ENCODE measurements at regions of chr12 and their contacts with region 1.

Region 1: GRCh38 chr12:69157023-69157655 is 82.2 kb upstream of the CPSF6 start:
- DNase-seq: peak; percentile 64
- ATAC-seq: peak; percentile 94
- H3K4me3 ChIP-seq: no peak overlapping the region
- H3K27ac ChIP-seq: no peak overlapping the region
- H3K4me1 ChIP-seq: peaks cover 18% of the 10 kb centered on the region
- H3K27me3 ChIP-seq: no peaks in the 10 kb centered on the region
- CTCF ChIP-seq: peak; percentile 95 to 100 (median 99); a peak in 5 of 6 replicates
- EP300 ChIP-seq: no peak
- POLR2A ChIP-seq: peak; percentile 35; the same call in 1 of the 2 replicates
- RAD21 ChIP-seq: peak; percentile 66

Region 2: DNA sequence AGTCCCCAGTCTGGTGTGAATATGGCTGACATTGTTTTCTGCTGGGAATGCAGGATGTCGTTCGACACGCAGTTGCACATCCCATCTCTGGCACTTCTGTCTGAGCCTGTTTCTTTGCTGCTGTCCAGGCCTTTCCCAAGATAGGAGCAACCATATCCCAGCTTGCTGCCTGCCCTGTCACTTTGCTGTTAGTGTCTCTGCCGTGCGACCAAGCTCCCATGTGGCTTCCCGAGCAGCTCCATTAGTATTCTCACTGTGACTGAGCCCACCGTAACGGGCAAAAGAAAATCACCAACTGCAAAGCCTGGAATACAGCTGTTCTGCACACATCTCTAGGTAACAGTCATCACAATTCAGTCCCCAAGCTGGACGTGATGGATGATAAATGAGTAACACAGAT is 16.2 kb after region 1 on chr12:
- CTCF ChIA-PET with region 1: interaction called, 17 read pairs
- POLR2A ChIA-PET with region 1: no interaction called
- RAD21 ChIA-PET with region 1: interaction called, 5 read pairs
- SMC1A ChIA-PET with region 1: interaction called, 4 read pairs
- in situ Hi-C with region 1: no loop called
- intact Hi-C with region 1: no loop called
- DNase-seq: no peak
- ATAC-seq: no peak
- H3K4me3 ChIP-seq: no peak overlapping the region
- H3K27ac ChIP-seq: no peak overlapping the region
- H3K4me1 ChIP-seq: no peaks in the 10 kb centered on the region
- H3K27me3 ChIP-seq: 0 out of 4 replicates have a peak, but pooled peaks cover 0 to 2% of the 10 kb centered on the region in 2 experiments
- CTCF ChIP-seq: no peak
- EP300 ChIP-seq: no peak
- POLR2A ChIP-seq: no peak
- RAD21 ChIP-seq: no peak

Region 3: DNA sequence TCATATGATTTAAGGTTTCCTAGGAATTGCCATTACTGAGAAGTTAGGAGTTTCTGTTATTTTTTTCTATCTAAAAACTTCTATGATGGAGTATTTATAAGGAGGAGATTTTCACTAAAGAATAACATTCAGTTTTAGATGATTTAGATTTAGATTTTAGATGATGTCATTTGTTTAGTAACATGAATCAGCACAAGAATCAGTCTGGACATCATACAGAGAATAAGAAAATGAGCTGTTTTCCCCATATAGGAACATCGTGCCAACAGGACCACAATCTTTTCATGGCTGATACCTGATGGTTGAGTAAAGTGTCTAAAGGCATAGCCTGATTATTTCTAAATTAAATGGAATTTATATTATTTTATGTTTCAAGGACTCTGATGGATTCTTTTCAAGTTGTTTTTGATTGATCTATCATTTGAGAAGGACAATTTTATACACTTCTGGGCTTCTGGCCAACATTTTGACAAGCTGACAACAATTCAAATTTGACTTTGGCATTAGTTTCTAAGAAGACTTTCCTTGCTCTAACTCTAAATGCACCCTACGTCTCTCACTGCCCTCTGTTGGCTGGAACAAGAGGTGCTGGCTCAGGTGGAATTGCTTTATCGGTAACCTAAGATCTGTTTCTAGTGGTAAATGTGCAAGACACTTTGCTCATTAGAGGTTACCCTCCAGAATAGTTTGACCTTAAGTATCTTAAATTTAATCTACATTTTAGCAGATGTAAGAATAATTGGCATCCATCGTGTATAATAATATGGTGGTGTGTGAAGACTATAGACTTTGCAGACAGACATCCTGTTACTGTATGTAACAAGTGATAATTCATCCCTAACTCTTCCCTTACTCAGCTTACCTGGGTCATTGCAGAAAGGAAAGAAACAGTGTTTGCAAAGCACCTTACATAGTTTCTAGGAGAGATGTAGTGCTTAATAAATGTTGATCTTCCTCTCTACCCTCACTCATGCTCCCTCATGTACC is 39.5 kb after region 1 on chr12:
- CTCF ChIA-PET with region 1: interaction called, 21 read pairs
- POLR2A ChIA-PET with region 1: no interaction called
- RAD21 ChIA-PET with region 1: interaction called, 9 read pairs
- SMC1A ChIA-PET with region 1: interaction called, 3 read pairs
- in situ Hi-C with region 1: no loop called
- intact Hi-C with region 1: loop called (anchors 2 kb)
- DNase-seq: no peak
- ATAC-seq: peak; percentile 45; the same call in 2 of the 3 replicates
- H3K4me3 ChIP-seq: no peak overlapping the region
- H3K27ac ChIP-seq: no peak overlapping the region
- H3K4me1 ChIP-seq: no peaks in the 10 kb centered on the region
- H3K27me3 ChIP-seq: no peaks in the 10 kb centered on the region
- CTCF ChIP-seq: peak; percentile 27 to 48 (median 46); a peak in 5 of 6 replicates
- EP300 ChIP-seq: no peak
- POLR2A ChIP-seq: no peak
- RAD21 ChIP-seq: 0 out of 2 replicates have a peak, but pooled peaks have one; percentile 21

Region 4: GRCh38 chr12:69247268-69248018 is 90.3 kb after region 1 on chr12:
- CTCF ChIA-PET with region 1: interaction called, 285 read pairs
- POLR2A ChIA-PET with region 1: interaction called, 7 read pairs
- RAD21 ChIA-PET with region 1: interaction called, 88 read pairs
- SMC1A ChIA-PET with region 1: interaction called, 103 read pairs
- in situ Hi-C with region 1: loop called (anchors 5 kb)
- intact Hi-C with region 1: no loop called
- DNase-seq: no peak
- ATAC-seq: no peak; the same call in 1 of the 3 replicates
- H3K4me3 ChIP-seq: no peak overlapping the region
- H3K27ac ChIP-seq: no peak overlapping the region; the same call in 1 of the 2 replicates
- H3K4me1 ChIP-seq: peaks cover 20% of the 10 kb centered on the region
- H3K27me3 ChIP-seq: no peaks in the 10 kb centered on the region
- CTCF ChIP-seq: no peak
- EP300 ChIP-seq: no peak
- POLR2A ChIP-seq: no peak
- RAD21 ChIP-seq: no peak

Region 5: GRCh38 chr12:69266036-69266635 is 109.0 kb after region 1 on chr12:
- CTCF ChIA-PET with region 1: interaction called, 28 read pairs
- POLR2A ChIA-PET with region 1: no interaction called
- RAD21 ChIA-PET with region 1: interaction called, 4 read pairs
- SMC1A ChIA-PET with region 1: interaction called, 11 read pairs
- in situ Hi-C with region 1: no loop called
- intact Hi-C with region 1: no loop called
- DNase-seq: no peak
- ATAC-seq: peak; percentile 36; the same call in 1 of the 3 replicates
- H3K4me3 ChIP-seq: no peak overlapping the region
- H3K27ac ChIP-seq: no peak overlapping the region
- H3K4me1 ChIP-seq: no peaks in the 10 kb centered on the region
- H3K27me3 ChIP-seq: no peaks in the 10 kb centered on the region
- CTCF ChIP-seq: no peak
- EP300 ChIP-seq: no peak
- POLR2A ChIP-seq: no peak
- RAD21 ChIP-seq: no peak

Region 6: GRCh38 chr12:69359531-69360347 is 202.6 kb after region 1 on chr12 and contains the start of gene YEATS4:
- CTCF ChIA-PET with region 1: interaction called, 26 read pairs
- POLR2A ChIA-PET with region 1: no interaction called
- RAD21 ChIA-PET with region 1: interaction called, 4 read pairs
- SMC1A ChIA-PET with region 1: interaction called, 19 read pairs
- in situ Hi-C with region 1: no loop called
- intact Hi-C with region 1: no loop called
- DNase-seq: peak; percentile 84
- ATAC-seq: peak; percentile 91
- H3K4me3 ChIP-seq: peak within 1 kb of the TSS; percentile 62
- H3K27ac ChIP-seq: peak within 1 kb of the TSS; percentile 98
- H3K4me1 ChIP-seq: no peaks in the 10 kb centered on the region; the same call in 1 of the 2 replicates
- H3K27me3 ChIP-seq: no peaks in the 10 kb centered on the region
- CTCF ChIP-seq: no peak
- EP300 ChIP-seq: no peak
- POLR2A ChIP-seq: peak; percentile 88
- RAD21 ChIP-seq: no peak
- polyA plus RNA-seq, gene YEATS4: 23.8 to 36.2 TPM